Mammary epithelial cell (primary cell): ENCODE measurements at regions of chr16 and their contacts with region 1.

Region 1: DNA sequence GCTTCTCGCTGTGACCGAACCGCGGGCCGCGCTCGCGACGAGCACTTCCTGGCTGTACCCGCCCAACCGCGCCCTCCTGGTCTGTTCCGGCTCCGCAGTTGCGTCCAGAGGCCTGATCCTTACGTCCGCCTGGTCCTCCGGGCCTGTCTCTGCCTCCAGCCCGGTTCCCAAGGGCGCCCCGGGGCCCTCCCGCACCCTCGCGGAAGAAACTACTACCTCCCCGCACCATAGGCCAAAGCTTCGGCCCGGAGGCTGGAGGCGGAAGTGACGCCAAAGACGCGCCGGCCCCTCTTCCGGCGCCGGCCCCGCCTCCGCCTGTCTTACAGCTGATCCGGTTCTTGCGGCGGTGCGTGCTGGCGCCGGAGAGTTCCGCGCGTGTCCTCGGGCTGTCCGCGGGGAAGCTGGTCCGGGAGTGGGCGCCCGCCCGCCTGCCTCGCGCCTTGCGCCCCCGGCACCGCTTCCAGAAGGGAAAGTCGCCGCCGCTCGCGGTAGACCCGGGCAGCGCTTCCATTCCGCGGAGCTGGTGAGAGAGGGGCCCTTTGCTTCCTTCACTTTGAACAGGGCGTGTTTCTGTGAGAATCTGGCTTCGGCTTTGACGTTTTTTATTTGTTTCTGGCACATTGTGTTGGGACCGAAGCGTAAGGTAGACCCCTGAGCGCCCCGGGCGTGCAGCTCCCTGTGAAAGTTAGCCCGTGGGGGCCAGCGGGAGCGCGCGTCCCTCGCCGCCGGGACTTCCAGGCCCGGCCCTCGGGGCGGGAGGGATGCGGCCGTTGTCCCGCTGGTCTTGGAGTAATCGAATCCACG is at the start of gene ZNF778:
- DNase-seq: peak; percentile 84
- H3K4me3 ChIP-seq: peak within 1 kb of the TSS; percentile 86 to 95 (median 90)
- H3K27ac ChIP-seq: peak within 1 kb of the TSS; percentile 67
- H3K4me1 ChIP-seq: peaks cover 13% of the 10 kb centered on the region
- H3K27me3 ChIP-seq: no peaks in the 10 kb centered on the region
- CTCF ChIP-seq: no peak
- total RNA-seq, gene ZNF778: 8.5 to 10.2 TPM

Region 2: DNA sequence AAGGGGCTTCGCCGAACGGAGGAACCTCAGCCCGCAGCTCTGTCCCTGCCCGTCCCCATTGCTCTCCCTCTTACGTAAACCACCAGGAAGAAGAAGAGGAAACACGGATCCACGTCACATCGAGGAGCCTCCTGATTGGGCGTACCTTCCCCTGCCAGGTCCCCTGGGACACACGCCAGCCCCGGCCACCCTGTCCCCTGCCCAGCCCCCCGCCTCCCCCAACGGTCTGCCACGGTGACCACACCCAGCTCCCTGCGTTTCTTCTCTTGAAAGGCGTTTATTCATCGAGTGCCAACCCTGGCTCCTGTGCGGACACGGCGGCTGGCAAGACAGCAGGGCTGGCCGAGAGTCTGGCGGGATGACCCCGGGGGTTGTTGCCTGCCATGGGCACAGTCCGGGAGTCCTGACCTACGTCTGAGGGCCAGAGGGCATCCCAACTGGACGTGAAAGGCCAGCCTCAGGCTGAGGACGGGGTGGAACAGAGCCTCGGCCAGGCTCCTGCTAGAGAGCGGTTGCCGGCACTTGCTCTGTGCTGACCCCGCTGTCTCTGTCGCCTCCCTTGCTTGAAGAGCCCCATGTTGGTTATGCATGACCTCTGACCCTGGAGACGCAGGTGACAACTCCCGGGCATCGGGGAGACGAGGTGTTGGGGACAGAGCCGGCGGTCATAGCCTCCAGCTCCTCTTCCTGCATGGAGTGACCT is 164.5 kb before region 1 on chr16:
- CTCF ChIA-PET with region 1: interaction called, 3 read pairs
- dilution Hi-C with region 1: loop called (anchors 5 kb)
- in situ Hi-C with region 1: no loop called
- intact Hi-C with region 1: no loop called
- DNase-seq: peak; percentile 62
- H3K4me3 ChIP-seq: peak overlapping the region; percentile 37 to 63 (median 63)
- H3K27ac ChIP-seq: no peak overlapping the region
- H3K4me1 ChIP-seq: peaks cover 22% of the 10 kb centered on the region
- H3K27me3 ChIP-seq: peaks cover 9% of the 10 kb centered on the region
- CTCF ChIP-seq: no peak

Region 3: GRCh38 chr16:89155184-89155679 is 62.4 kb before region 1 on chr16:
- CTCF ChIA-PET with region 1: no interaction called
- dilution Hi-C with region 1: loop called (anchors 10 kb)
- in situ Hi-C with region 1: no loop called
- intact Hi-C with region 1: loop called (anchors 10 kb)
- DNase-seq: no peak
- H3K4me3 ChIP-seq: no peak overlapping the region
- H3K27ac ChIP-seq: no peak overlapping the region
- H3K4me1 ChIP-seq: peaks cover 5% of the 10 kb centered on the region
- H3K27me3 ChIP-seq: no peaks in the 10 kb centered on the region
- CTCF ChIP-seq: no peak

Region 4: GRCh38 chr16:89201439-89202377 is 15.9 kb before region 1 on chr16:
- CTCF ChIA-PET with region 1: no interaction called
- dilution Hi-C with region 1: no loop called
- in situ Hi-C with region 1: no loop called
- intact Hi-C with region 1: loop called (anchors 2 kb)
- DNase-seq: peak; percentile 59
- H3K4me3 ChIP-seq: no peak overlapping the region
- H3K27ac ChIP-seq: no peak overlapping the region
- H3K4me1 ChIP-seq: no peaks in the 10 kb centered on the region
- H3K27me3 ChIP-seq: peaks cover 18% of the 10 kb centered on the region
- CTCF ChIP-seq: no peak

Region 5: GRCh38 chr16:89560378-89561141 is 343.0 kb after region 1 on chr16 and contains the start of gene RPL13:
- CTCF ChIA-PET with region 1: no interaction called
- dilution Hi-C with region 1: no loop called
- in situ Hi-C with region 1: no loop called
- intact Hi-C with region 1: loop called (anchors 2 kb)
- DNase-seq: peak; percentile 95
- H3K4me3 ChIP-seq: peak within 1 kb of the TSS; percentile 64 to 81 (median 78)
- H3K27ac ChIP-seq: peak within 1 kb of the TSS; percentile 88
- H3K4me1 ChIP-seq: peaks cover 43% of the 10 kb centered on the region
- H3K27me3 ChIP-seq: no peaks in the 10 kb centered on the region
- CTCF ChIP-seq: no peak
- total RNA-seq, gene RPL13: 1,876 to 2,450 TPM